IMR-90 (cell line): ENCODE measurements at regions of chr4 and their contacts with region 1.

Region 1: GRCh38 chr4:84855774-84856173 is 110.7 kb downstream of the WDFY3 start:
- DNase-seq: no peak
- ATAC-seq: no peak; the same call in 1 of the 2 replicates
- H3K4me3 ChIP-seq: no peak overlapping the region
- H3K27ac ChIP-seq: no peak overlapping the region
- H3K4me1 ChIP-seq: no peaks in the 10 kb centered on the region
- H3K27me3 ChIP-seq: no peaks in the 10 kb centered on the region
- CTCF ChIP-seq: no peak
- POLR2A ChIP-seq: no peak
- RAD21 ChIP-seq: no peak

Region 2: GRCh38 chr4:84837751-84838150 is 18.0 kb before region 1 on chr4:
- CTCF ChIA-PET with region 1: no interaction called
- POLR2A ChIA-PET with region 1: no interaction called
- dilution Hi-C with region 1: no loop called
- in situ Hi-C with region 1: no loop called
- intact Hi-C with region 1: loop called (anchors 1 kb)
- DNase-seq: peak; percentile 12
- ATAC-seq: no peak
- H3K4me3 ChIP-seq: no peak overlapping the region
- H3K27ac ChIP-seq: no peak overlapping the region
- H3K4me1 ChIP-seq: no peaks in the 10 kb centered on the region
- H3K27me3 ChIP-seq: no peaks in the 10 kb centered on the region
- CTCF ChIP-seq: no peak
- POLR2A ChIP-seq: no peak
- RAD21 ChIP-seq: no peak

Region 3: DNA sequence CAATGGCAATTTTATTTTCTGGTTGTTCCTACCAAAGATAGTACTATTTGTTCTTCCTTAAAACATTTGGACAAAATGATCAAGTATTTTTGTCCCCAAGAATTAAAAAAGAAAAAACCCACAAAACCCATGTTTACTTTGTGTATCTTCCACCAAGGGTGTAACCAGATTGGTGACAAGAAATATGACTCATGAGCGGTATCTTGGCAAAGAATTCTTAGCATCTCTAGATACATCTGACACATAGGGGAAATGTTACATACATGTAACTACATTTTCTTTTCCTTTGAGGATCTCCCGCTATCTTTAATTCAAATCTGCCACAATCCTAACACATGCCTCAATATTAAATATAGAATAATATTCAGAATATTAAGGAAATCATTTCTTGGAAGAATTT is 32.0 kb after region 1 on chr4:
- CTCF ChIA-PET with region 1: no interaction called
- POLR2A ChIA-PET with region 1: no interaction called
- dilution Hi-C with region 1: no loop called
- in situ Hi-C with region 1: no loop called
- intact Hi-C with region 1: no loop called
- DNase-seq: peak; percentile 66
- ATAC-seq: no peak
- H3K4me3 ChIP-seq: no peak overlapping the region
- H3K27ac ChIP-seq: no peak overlapping the region
- H3K4me1 ChIP-seq: no peaks in the 10 kb centered on the region
- H3K27me3 ChIP-seq: no peaks in the 10 kb centered on the region
- CTCF ChIP-seq: no peak
- POLR2A ChIP-seq: no peak
- RAD21 ChIP-seq: no peak